MCF 10A (cell line): ENCODE measurements at regions of chr2 and their contacts with region 1.

Region 1: DNA sequence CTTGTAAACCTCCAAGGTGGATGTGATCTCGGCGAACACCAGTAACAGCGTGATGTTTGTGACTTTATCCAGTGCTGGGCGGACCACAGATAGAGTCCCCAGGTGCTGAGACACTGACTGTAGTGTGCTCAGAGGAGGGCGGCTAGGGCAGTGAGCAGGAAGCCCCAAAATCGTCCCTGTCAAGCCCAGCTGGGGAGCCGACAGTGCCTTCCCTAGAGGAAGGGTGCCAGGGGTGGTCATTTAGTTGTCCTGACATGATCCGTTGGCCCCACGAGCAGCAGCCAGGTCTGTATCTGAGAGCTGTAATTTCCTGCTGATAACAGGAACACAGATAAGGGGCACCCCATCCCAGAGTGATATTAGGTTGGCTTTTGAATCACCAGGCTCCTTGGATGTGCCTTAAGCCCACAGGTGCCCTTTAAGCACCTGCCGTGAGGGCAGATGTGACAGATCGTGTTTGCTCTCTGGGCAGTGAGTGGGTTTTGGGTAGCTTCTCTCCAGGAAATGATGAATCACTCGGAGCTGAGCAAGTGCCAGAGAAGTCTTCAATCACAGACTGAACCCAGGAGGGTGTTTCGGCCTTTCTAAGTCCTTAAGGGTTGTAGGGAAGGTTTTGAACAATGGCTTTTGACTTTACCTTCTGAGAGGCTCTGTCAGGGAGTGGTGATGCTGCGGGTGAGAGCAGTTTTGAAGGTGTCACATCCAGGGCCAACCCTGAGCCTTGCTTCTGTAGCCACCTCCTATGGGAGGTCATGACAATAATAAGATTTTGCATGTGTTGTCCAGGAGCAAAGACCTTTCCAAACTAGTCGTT is 7.7 kb downstream of the LPIN1 start:
- DNase-seq: peak; percentile 88
- H3K4me3 Mint-ChIP-seq: peak overlapping the region; percentile 39
- H3K27ac Mint-ChIP-seq: peak overlapping the region; percentile 62
- H3K4me1 Mint-ChIP-seq: peaks cover 54% of the 10 kb centered on the region
- H3K27me3 Mint-ChIP-seq: no peaks in the 10 kb centered on the region
- CTCF ChIP-seq: no peak

Region 2: GRCh38 chr2:11688222-11689069 is 65.6 kb before region 1 on chr2:
- CTCF ChIA-PET with region 1: interaction called, 29 read pairs
- POLR2A ChIA-PET with region 1: interaction called, 18 read pairs
- intact Hi-C with region 1: loop called (anchors 1 kb)
- DNase-seq: peak; percentile 81
- H3K4me3 Mint-ChIP-seq: peak overlapping the region; percentile 70
- H3K27ac Mint-ChIP-seq: peak overlapping the region; percentile 37
- H3K4me1 Mint-ChIP-seq: peaks cover 10% of the 10 kb centered on the region
- H3K27me3 Mint-ChIP-seq: peaks cover 16% of the 10 kb centered on the region
- CTCF ChIP-seq: peak; percentile 82

Region 3: DNA sequence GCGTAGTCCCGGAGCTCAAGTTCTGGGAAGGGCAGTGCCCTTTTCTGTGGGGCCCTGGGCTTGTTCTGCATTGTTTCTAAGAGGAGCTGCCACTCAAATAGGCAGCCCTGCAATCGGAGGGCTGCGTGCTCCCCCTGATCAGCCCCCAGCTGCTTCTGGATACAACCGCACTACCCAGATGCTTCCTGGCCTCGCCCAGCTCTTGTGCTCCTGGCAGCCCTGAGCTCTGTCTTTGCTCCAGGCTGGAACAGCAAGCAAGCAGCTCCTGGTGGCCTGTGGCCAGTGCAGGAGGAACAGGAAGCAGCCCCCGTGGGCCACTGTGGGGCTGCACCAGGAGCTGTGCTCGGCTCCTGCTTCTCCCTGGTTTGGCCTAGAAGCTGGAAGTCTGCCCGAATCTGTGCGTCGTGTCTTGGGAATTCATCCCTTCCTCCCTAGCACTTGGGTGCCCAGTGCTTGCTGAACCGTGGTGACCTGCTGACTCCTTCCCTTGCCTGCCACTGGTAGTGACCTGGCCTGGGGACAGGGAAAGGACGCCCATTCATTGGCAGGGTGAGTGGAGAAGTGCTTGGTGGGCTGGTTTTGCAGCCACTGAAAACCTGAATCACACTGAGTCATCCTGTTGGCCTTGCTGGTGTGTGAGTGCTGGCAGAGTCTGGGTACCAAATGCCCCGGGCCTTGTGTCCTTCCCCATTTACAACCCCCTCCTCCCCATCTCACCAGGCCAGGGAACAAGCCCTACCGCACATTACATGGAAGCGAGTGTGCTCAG is 56.8 kb before region 1 on chr2:
- CTCF ChIA-PET with region 1: interaction called, 29 read pairs
- POLR2A ChIA-PET with region 1: interaction called, 18 read pairs
- intact Hi-C with region 1: loop called (anchors 1 kb)
- DNase-seq: peak; percentile 96
- H3K4me3 Mint-ChIP-seq: no peak overlapping the region
- H3K27ac Mint-ChIP-seq: peak overlapping the region; percentile 57
- H3K4me1 Mint-ChIP-seq: peaks cover 14% of the 10 kb centered on the region
- H3K27me3 Mint-ChIP-seq: no peaks in the 10 kb centered on the region
- CTCF ChIP-seq: no peak

Region 4: DNA sequence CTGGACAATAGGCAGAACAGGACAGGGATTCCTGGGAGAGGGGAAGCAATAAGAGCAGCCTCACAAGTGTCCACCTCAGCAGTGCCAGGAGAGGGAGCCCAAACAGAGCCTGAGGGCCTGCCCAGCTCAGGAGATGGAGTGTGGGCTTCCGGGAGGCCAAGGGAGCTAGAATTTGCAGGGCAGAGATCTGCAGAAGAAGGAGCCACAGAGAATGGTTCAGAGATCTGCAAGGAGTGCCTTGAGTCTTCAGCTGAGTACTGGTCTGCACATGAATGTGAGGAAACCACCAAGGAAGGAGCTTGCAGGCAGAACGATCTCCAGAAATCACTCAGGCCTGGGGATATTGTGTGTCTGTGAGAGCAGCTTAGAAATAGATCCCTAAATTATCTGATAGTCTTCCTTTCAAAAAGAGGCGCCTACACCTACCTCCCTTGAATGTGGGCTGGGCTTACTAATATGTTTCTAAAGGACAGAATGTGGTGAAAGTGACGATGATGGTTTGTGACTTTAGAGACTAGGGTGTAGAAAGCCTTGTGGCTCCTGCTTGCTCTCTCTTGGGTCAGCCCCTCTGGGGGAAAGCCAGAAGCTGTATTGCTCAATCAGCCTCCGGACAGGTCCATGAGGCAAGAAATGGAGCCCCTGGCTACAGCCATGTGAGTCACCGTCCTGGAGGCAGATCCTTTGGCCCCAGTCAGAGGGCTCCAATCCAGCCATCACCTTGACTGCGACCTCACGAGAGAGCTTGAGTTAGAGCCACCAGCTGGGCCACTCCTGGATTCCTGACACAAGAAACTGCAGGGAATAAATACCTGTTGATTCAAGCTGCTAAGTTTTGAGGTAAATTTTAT is 15.3 kb before region 1 on chr2:
- CTCF ChIA-PET with region 1: interaction called, 13 read pairs
- POLR2A ChIA-PET with region 1: interaction called, 34 read pairs
- intact Hi-C with region 1: no loop called
- DNase-seq: peak; percentile 85
- H3K4me3 Mint-ChIP-seq: no peak overlapping the region
- H3K27ac Mint-ChIP-seq: peak overlapping the region; percentile 44
- H3K4me1 Mint-ChIP-seq: peaks cover 19% of the 10 kb centered on the region
- H3K27me3 Mint-ChIP-seq: no peaks in the 10 kb centered on the region
- CTCF ChIP-seq: peak; percentile 38

Region 5: DNA sequence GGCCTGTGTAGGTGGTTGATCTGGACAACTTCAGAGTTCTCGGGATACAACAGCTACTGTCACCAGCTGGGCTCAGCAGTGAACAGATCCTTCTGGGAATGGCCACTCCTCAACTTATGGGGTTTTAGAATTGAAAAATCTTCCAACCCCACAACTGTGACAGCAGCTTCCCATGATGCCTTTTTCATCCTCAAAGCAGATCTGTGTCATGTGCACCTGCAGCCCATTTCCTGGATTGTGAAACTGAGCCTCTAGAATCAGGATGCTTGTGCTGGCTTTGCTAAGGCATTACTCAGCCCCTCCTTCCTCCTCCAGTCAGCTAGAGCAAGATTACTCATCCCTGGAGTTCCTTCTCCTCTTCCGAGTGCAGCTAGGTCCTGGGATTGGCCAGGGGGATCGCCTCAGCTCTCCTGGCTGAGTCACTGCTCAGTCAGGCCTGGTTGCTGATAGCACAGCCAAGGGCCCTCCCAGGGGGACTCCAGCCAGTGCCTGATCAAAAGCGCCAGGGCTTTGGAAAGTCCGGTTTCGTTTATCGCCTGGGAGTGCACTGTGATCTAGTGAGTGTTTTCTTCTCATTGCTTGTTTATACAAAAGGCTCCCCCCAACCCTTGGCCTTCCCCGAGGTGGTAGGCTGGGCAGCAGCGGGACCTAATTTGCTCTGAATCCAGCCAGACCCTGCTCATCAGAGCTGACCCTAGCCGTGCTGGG is 10.1 kb before region 1 on chr2:
- CTCF ChIA-PET with region 1: interaction called, 13 read pairs
- POLR2A ChIA-PET with region 1: interaction called, 34 read pairs
- intact Hi-C with region 1: no loop called
- DNase-seq: peak; percentile 99
- H3K4me3 Mint-ChIP-seq: peak overlapping the region; percentile 33
- H3K27ac Mint-ChIP-seq: peak overlapping the region; percentile 82
- H3K4me1 Mint-ChIP-seq: peaks cover 29% of the 10 kb centered on the region
- H3K27me3 Mint-ChIP-seq: no peaks in the 10 kb centered on the region
- CTCF ChIP-seq: no peak

Region 6: DNA sequence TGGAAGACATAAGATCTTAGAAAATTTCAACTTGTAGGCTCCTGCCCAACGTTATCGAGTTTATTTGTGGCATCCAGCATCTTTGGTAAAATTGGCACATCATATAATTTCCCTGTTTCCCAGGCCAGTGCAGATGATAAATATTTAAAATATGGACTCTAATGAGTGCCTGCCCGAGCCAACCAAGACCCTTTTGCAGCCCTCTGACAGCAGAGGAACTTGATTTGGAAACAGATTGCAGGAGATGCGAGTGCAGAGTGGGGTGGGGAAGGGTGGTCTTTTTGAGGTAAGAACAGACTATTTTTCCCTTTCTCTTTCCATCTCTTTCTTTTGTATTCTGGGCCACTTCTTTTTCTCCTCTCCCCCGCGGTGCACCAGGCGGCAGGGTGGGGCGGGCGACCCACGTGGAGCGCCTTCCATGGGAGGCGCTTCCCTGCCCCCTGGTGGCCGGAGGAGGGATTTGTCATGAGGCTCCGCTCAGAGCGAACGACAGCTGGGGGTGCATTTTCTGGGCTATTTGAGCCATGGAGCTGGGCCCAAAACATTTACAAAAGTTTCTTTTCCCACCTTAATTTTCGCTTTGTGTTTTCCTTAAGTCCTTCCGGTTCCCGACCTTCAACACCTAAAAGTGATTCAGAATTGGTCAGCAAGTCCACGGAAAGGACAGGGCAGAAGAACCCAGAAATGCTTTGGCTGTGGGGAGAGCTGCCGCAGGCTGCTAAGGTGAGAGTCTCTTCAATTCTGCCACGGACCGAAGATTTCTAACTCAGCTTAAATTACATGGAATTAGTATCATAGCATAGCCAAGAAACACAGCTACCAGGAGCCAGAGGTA is 25.0 kb after region 1 on chr2:
- CTCF ChIA-PET with region 1: interaction called, 24 read pairs
- POLR2A ChIA-PET with region 1: interaction called, 10 read pairs
- intact Hi-C with region 1: no loop called
- DNase-seq: peak; percentile 73
- H3K4me3 Mint-ChIP-seq: no peak overlapping the region
- H3K27ac Mint-ChIP-seq: peak overlapping the region; percentile 16
- H3K4me1 Mint-ChIP-seq: peaks cover 4% of the 10 kb centered on the region
- H3K27me3 Mint-ChIP-seq: no peaks in the 10 kb centered on the region
- CTCF ChIP-seq: peak; percentile 98

Region 7: GRCh38 chr2:11784747-11785610 is 30.9 kb after region 1 on chr2:
- CTCF ChIA-PET with region 1: interaction called, 24 read pairs
- POLR2A ChIA-PET with region 1: interaction called, 4 read pairs
- intact Hi-C with region 1: no loop called
- DNase-seq: peak; percentile 21
- H3K4me3 Mint-ChIP-seq: no peak overlapping the region
- H3K27ac Mint-ChIP-seq: no peak overlapping the region
- H3K4me1 Mint-ChIP-seq: no peaks in the 10 kb centered on the region
- H3K27me3 Mint-ChIP-seq: no peaks in the 10 kb centered on the region
- CTCF ChIP-seq: peak; percentile 92

Region 8: GRCh38 chr2:13354031-13354430 is 1599.9 kb after region 1 on chr2:
- CTCF ChIA-PET with region 1: no interaction called
- POLR2A ChIA-PET with region 1: no interaction called
- intact Hi-C with region 1: no loop called
- DNase-seq: no peak
- H3K4me3 Mint-ChIP-seq: no peak overlapping the region
- H3K27ac Mint-ChIP-seq: no peak overlapping the region
- H3K4me1 Mint-ChIP-seq: no peaks in the 10 kb centered on the region
- H3K27me3 Mint-ChIP-seq: no peaks in the 10 kb centered on the region
- CTCF ChIP-seq: no peak